ENCODE measurements at regions of chr6 and their contacts with region 1.

Region 1: DNA sequence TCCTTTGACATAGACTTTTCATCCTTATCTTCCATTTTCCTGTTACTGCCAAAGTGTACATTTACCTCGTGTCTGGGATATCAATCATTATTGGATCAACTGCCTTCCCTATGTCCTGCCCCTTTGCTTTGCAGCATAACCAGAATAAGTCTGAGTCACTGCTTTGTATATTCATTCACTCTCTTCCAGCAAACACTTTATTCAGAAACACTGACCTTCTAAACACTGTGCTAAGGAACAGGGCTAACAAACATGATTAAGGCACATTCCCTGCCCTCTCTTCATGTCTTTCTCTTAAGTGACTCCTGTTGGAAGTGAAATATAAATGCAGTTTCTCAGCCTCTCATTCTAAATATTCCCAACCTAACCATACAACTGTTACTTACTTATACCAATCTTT is 66.9 kb downstream of the COL19A1 start:
- DNase-seq: no peak
- ATAC-seq: no peak
- H3K4me3 Mint-ChIP-seq: no peak overlapping the region
- H3K27ac Mint-ChIP-seq: peak overlapping the region; percentile 8
- H3K4me1 Mint-ChIP-seq: peaks cover 13% of the 10 kb centered on the region
- H3K27me3 Mint-ChIP-seq: no peaks in the 10 kb centered on the region
- CTCF ChIP-seq: no peak

Region 2: DNA sequence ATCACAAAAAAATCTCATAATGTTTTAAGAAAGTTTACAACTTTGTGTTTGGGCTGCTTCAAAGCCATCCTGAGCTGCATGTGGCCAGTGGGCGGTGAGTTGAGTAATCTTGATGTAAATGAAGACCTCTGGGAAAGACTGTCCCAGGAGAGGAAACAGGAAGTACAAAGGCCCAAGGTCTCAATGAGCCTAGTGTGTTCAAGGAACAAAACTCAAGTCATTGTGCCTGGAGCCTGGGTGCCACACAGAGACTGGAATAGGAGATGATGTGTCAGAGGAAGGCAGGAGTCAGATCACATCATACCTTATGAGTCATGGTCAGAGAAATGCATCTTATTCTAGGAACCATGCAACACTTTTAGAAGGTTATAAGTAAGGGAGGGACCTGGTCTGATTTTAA is 15.4 kb before region 1 on chr6:
- CTCF ChIA-PET with region 1: no interaction called
- POLR2A ChIA-PET with region 1: no interaction called
- intact Hi-C with region 1: loop called (anchors 2 kb)
- DNase-seq: no peak
- ATAC-seq: peak; percentile 84
- H3K4me3 Mint-ChIP-seq: peak overlapping the region; percentile 36
- H3K27ac Mint-ChIP-seq: peak overlapping the region; percentile 54
- H3K4me1 Mint-ChIP-seq: peaks cover 48% of the 10 kb centered on the region
- H3K27me3 Mint-ChIP-seq: no peaks in the 10 kb centered on the region
- CTCF ChIP-seq: no peak

Region 3: DNA sequence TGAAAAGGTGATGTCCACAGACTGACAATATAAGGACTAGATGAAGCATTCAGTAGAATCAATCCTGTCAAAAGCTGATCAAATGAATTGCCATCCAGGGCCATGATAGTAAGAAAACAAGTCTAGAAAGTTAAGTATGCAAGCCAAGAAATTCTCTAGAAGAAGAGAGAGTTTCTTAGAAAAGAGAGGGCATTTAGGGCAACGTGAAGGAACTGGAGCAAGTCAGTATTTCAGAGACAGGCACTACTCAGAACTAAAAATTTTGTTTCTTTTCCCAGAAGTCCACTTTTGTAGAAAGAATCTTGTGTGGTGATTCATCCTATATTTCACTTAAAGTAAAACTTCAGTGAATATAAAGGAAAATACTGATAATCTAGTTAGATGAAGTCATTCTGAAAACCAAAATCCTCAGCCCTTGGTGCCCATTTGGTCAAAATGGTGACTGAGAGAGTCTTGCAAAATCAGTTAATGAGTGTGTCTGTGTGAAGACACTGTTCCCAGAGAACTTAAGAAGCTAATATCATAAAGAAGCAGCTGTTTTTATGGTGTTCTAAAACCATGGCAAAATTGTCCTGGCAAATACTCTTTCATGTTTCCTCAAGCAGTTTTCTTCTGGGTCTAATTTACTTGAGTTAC is 15.4 kb after region 1 on chr6:
- CTCF ChIA-PET with region 1: no interaction called
- POLR2A ChIA-PET with region 1: no interaction called
- intact Hi-C with region 1: loop called (anchors 2 kb)
- DNase-seq: no peak
- ATAC-seq: no peak
- H3K4me3 Mint-ChIP-seq: no peak overlapping the region
- H3K27ac Mint-ChIP-seq: no peak overlapping the region
- H3K4me1 Mint-ChIP-seq: peaks cover 12% of the 10 kb centered on the region
- H3K27me3 Mint-ChIP-seq: no peaks in the 10 kb centered on the region
- CTCF ChIP-seq: no peak